ENCODE measurements at regions of chr19 and their contacts with region 1.

Region 1: DNA sequence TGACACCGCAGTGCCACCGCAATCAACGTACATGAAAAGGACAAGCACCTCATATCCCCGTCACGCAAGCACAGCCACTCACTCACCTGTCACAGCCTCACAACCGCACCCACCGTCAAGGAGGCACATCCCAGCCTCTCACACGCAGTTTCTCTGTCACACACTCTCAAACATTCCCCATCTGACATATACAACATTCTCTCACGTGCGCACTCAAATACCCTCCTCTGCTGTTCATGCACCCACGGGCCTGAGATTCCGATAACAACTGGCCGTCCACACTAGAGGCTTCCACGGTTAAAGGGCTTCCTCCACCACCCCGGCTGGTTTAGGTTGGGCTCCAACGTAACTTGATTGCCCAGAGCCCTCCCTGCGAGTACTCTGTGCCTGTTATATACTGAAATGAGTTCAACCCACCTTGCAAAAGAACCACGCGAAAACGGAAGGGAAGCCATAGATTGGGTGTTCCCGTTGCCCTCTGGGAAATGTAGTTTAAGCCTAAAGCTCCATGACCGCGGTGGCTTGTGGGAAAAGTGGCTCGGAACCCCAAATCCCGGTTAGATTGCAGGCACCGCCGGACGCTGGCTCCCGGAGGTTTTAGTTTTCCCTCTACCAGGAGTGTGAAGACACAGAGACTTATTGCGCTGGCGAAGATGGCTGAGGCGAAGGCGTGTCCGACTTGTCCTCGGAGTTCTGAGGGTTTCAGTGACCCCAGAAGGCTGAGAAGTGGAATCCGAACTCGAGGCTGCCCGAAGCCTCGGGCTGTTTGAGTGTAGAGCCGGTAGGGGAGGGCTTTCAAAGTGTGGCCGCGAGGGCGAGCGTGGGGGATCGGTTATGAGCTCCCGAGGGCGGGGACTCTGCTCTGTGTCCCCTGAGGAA is at the start of gene ZNF573:
- DNase-seq: peak; percentile 66 to 99 (median 82)
- ATAC-seq: peak; percentile 84
- H3K4me3 ChIP-seq: peak within 1 kb of the TSS; percentile 67 to 70
- H3K4me3 Mint-ChIP-seq: peak within 1 kb of the TSS; percentile 97
- H3K27ac ChIP-seq: peak within 1 kb of the TSS; percentile 96 to 98
- H3K27ac Mint-ChIP-seq: peak within 1 kb of the TSS; percentile 91
- H3K4me1 ChIP-seq: peaks cover 12% of the 10 kb centered on the region
- H3K4me1 Mint-ChIP-seq: peaks cover 46% of the 10 kb centered on the region
- H3K27me3 ChIP-seq: no peaks in the 10 kb centered on the region
- H3K27me3 Mint-ChIP-seq: no peaks in the 10 kb centered on the region
- CTCF ChIP-seq: no peak
- total RNA-seq, gene ZNF573: 3.9 to 5.8 TPM

Region 2: GRCh38 chr19:36665832-36666231 is 1113.5 kb before region 1 on chr19:
- CTCF ChIA-PET with region 1: no interaction called
- POLR2A ChIA-PET with region 1: no interaction called
- intact Hi-C with region 1: loop called in 1 of 2 experiments (anchors 2 kb)
- DNase-seq: peak in 1 of 9 experiments; percentile 8
- ATAC-seq: no peak
- H3K4me3 ChIP-seq: peak overlapping the region; percentile 62 to 63
- H3K4me3 Mint-ChIP-seq: peak overlapping the region; percentile 98
- H3K27ac ChIP-seq: peak overlapping the region; percentile 59 to 72
- H3K27ac Mint-ChIP-seq: peak overlapping the region; percentile 73
- H3K4me1 ChIP-seq: peaks cover 8% of the 10 kb centered on the region
- H3K4me1 Mint-ChIP-seq: peaks cover 35% of the 10 kb centered on the region
- H3K27me3 ChIP-seq: no peaks in the 10 kb centered on the region
- H3K27me3 Mint-ChIP-seq: no peaks in the 10 kb centered on the region
- CTCF ChIP-seq: no peak

Region 3: GRCh38 chr19:37334179-37335071 is 444.9 kb before region 1 on chr19:
- CTCF ChIA-PET with region 1: no interaction called
- POLR2A ChIA-PET with region 1: no interaction called
- intact Hi-C with region 1: loop called in 1 of 2 experiments (anchors 1 kb)
- DNase-seq: peak; percentile 75 to 96 (median 87)
- ATAC-seq: peak; percentile 97
- H3K4me3 ChIP-seq: peak overlapping the region; percentile 46 to 74
- H3K4me3 Mint-ChIP-seq: peak overlapping the region; percentile 96
- H3K27ac ChIP-seq: peak overlapping the region; percentile 46 to 87
- H3K27ac Mint-ChIP-seq: peak overlapping the region; percentile 95
- H3K4me1 ChIP-seq: peaks cover 10% of the 10 kb centered on the region
- H3K4me1 Mint-ChIP-seq: peaks cover 47% of the 10 kb centered on the region
- H3K27me3 ChIP-seq: no peaks in the 10 kb centered on the region
- H3K27me3 Mint-ChIP-seq: no peaks in the 10 kb centered on the region
- CTCF ChIP-seq: no peak

Region 4: DNA sequence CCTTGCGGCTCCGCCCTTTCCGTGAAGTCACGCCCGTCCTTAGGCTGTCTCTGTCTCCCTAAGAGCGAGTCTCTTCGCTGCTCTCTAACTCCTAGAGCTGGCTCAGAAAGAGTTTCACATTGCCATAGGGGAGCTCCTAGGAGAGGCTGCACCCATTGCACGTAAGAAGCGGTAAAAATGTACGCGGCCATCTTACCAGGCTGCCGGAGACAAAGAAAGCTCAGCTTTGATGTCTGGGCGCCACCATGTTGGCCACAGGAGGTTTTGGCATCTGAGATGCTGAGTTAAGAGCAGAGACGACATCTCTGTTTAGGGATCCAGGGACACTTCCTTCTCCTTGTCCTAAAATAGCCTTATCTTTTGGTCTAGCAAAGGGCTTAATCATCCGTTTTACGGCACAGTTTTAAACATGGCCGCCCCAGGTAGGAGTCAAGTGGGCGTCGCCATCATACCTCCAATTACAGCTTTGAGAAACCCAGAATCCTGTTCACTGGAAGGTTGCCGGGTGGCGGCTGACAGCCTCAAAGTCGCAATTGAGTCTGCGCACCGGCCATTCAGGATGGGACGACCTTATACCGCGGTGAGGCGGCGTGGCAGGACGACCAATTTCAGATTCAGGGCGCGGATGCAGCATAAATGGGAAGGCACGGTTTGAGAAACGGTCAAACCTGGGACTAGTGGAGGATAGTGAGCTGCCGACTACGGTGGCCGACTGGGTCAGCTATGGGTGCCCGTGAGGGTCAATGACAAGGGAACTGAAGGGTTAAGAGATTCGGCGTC is 272.8 kb before region 1 on chr19 and contains the start of gene ZNF793:
- CTCF ChIA-PET with region 1: no interaction called
- POLR2A ChIA-PET with region 1: interaction called, 3 read pairs
- intact Hi-C with region 1: loop called (anchors 1 kb)
- DNase-seq: peak; percentile 53 to 89 (median 83)
- ATAC-seq: peak; percentile 87
- H3K4me3 ChIP-seq: peak within 1 kb of the TSS; percentile 82 to 86
- H3K4me3 Mint-ChIP-seq: no peak within 1 kb of the TSS
- H3K27ac ChIP-seq: peak within 1 kb of the TSS; percentile 94 to 97
- H3K27ac Mint-ChIP-seq: no peak within 1 kb of the TSS
- H3K4me1 ChIP-seq: peaks cover 16% of the 10 kb centered on the region
- H3K4me1 Mint-ChIP-seq: no peaks in the 10 kb centered on the region
- H3K27me3 ChIP-seq: no peaks in the 10 kb centered on the region
- H3K27me3 Mint-ChIP-seq: no peaks in the 10 kb centered on the region
- CTCF ChIP-seq: no peak
- total RNA-seq, gene ZNF793: 2.4 to 3.3 TPM

Region 5: DNA sequence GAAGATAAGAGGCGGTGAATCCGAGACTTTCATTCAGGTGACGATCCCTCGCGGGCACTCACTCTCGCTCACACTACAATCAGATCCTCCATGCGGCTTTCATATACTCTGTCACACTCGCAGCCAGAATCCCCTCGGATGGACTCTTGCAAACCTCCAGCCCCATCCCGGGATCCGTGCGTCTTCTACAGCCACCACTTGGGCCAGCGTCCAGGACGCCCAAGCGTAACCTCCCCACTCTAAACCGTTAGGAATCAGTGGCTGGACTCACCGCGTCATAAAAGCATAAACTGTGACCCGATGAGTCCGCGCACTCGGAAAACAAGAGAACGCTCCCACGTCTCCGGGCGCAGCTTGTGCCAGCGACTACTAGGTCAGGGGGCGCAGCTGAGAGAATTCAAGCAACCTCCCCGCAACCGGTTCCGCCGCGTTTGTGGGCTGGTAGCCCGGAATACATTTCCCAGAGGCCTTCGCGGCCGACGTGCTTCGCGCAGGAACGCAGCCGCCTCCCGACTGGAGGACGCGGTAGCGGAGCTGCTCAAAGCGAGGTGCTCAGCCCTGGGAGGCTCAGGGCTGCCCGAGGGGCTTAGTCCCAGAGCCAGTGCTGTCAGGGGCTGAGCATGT is 87.4 kb before region 1 on chr19:
- CTCF ChIA-PET with region 1: no interaction called
- POLR2A ChIA-PET with region 1: interaction called, 8 read pairs
- intact Hi-C with region 1: loop called (anchors 1 kb)
- DNase-seq: peak; percentile 54 to 90 (median 80)
- ATAC-seq: peak; percentile 92
- H3K4me3 ChIP-seq: peak overlapping the region; percentile 58 to 73
- H3K4me3 Mint-ChIP-seq: peak overlapping the region; percentile 96
- H3K27ac ChIP-seq: peak overlapping the region; percentile 65 to 74
- H3K27ac Mint-ChIP-seq: peak overlapping the region; percentile 96
- H3K4me1 ChIP-seq: no peaks in the 10 kb centered on the region
- H3K4me1 Mint-ChIP-seq: peaks cover 13% of the 10 kb centered on the region
- H3K27me3 ChIP-seq: no peaks in the 10 kb centered on the region
- H3K27me3 Mint-ChIP-seq: no peaks in the 10 kb centered on the region
- CTCF ChIP-seq: no peak

Region 6: GRCh38 chr19:38049105-38049649 is 269.8 kb after region 1 on chr19:
- CTCF ChIA-PET with region 1: no interaction called
- POLR2A ChIA-PET with region 1: no interaction called
- intact Hi-C with region 1: loop called in 1 of 2 experiments (anchors 1 kb)
- DNase-seq: peak in 8 of 9 experiments; percentile 31 to 89 (median 61)
- ATAC-seq: peak; percentile 86
- H3K4me3 ChIP-seq: peak overlapping the region; percentile 29
- H3K4me3 Mint-ChIP-seq: peak overlapping the region; percentile 74
- H3K27ac ChIP-seq: peak overlapping the region; percentile 69 to 90
- H3K27ac Mint-ChIP-seq: peak overlapping the region; percentile 98
- H3K4me1 ChIP-seq: peaks cover 31% of the 10 kb centered on the region
- H3K4me1 Mint-ChIP-seq: peaks cover 53% of the 10 kb centered on the region
- H3K27me3 ChIP-seq: no peaks in the 10 kb centered on the region
- H3K27me3 Mint-ChIP-seq: no peaks in the 10 kb centered on the region
- CTCF ChIP-seq: no peak